ENCODE measurements at regions of chr14 and their contacts with region 1.

Region 1: GRCh38 chr14:62126879-62127478 is 364.8 kb downstream of the SNAPC1 start:
- DNase-seq: peak; percentile 47
- H3K27ac ChIP-seq: no peak overlapping the region
- CTCF ChIP-seq: peak; percentile 83

Region 2: DNA sequence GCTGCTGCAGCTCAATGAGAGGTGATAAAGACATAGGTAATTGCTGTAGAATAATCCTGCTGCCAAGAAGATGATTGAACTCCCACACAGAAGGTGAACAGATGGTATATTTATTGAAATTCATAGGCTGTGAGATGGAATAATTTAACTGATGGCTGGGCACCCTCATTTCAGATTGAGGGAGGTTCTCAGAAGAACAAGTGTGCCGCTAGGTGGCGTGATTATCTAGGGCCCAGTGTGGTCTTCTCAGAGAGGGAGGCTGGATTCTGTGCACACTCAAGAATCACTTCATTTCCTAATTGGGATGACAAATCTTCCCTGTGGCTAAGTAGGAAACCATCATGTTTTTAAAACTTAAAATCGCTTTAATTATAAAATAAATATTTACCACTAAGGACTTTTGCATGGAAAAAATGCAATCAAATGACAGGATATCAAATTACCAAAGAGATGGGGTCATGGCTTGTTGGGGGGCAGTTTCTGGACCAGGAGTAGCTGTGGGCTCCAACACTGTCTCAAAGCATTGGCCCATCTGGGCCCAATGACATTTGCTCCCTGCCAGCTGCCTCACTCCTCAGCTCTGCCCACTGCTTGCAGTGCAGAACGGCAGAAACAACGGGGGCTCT is 232.4 kb before region 1 on chr14:
- CTCF ChIA-PET with region 1: interaction called, 30 read pairs
- POLR2A ChIA-PET with region 1: no interaction called
- DNase-seq: peak; percentile 73
- H3K27ac ChIP-seq: no peak overlapping the region
- CTCF ChIP-seq: peak; percentile 77

Region 3: GRCh38 chr14:61925043-61925442 is 201.9 kb before region 1 on chr14:
- CTCF ChIA-PET with region 1: interaction called, 14 read pairs
- POLR2A ChIA-PET with region 1: no interaction called
- DNase-seq: no peak
- H3K27ac ChIP-seq: no peak overlapping the region
- CTCF ChIP-seq: no peak